HEK293 (cell line): ENCODE measurements at regions of chr9 and their contacts with region 1.

Region 1: DNA sequence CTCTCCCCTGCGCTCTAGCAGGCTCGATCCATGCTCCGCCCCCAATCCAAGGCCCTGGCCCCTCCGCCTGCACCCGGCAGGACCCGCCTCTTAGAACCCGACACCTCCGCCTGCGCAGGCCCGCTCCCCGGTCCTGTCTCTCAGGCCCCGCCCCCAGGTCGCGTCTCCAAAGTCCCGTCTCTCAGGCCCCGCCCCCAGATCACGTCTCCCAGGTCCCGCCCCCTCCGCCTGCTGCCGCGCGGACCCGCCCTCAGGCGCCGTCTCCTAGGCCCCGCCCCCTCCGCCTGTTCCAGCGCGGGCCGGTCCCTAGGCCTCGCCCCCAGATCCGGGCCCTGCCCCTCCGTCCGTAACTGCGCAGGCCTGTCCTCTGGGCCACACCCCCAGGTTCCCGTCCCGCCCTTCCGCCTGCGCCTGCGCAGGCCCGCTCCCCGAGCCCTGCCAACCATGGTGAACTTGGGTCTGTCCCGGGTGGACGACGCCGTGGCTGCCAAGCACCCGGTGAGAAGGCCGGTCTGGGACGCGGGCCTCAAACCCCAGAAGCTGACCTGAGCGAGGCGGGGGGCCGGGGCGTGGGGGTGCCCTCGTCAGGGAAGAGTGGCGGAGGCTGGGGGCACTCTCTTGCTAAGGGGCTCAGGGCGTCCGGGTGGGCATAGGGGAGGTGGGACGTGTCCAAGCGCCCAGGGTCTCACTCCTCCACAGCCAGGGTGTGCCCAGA is at the start of gene TMEM141:
- H3K4me3 ChIP-seq: peak within 1 kb of the TSS; percentile 47
- H3K27ac ChIP-seq: peak within 1 kb of the TSS; percentile 74
- H3K4me1 ChIP-seq: peaks cover 7% of the 10 kb centered on the region
- CTCF ChIP-seq: no peak

Region 2: DNA sequence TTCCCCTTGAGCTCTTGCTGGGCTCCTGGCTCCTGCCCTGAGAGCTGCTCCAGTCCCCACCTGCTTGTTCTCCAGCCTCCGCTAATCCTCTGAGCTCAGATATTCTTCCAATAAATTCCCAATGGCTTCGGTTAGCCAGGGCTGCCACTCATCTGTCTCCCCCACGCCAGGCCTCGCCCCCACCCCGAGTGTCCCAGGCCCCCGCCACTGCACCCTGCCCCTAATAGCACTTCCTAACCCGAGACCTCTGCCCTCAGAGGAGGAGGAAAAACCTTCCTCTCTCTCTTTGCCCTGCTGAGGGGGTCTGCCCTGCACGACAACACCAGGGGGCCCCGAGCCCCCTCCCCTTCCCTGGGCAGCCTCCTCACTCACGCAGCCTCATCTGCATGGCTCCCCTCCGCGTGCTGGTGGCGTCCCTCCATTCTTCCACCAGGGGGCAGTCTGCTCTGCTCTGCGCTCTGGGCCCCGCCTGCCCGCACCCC is 21.3 kb before region 1 on chr9:
- CTCF ChIA-PET with region 1: interaction called, 16 read pairs
- POLR2A ChIA-PET with region 1: no interaction called
- H3K4me3 ChIP-seq: no peak overlapping the region
- H3K27ac ChIP-seq: no peak overlapping the region
- H3K4me1 ChIP-seq: no peaks in the 10 kb centered on the region
- CTCF ChIP-seq: peak; percentile 59

Region 3: DNA sequence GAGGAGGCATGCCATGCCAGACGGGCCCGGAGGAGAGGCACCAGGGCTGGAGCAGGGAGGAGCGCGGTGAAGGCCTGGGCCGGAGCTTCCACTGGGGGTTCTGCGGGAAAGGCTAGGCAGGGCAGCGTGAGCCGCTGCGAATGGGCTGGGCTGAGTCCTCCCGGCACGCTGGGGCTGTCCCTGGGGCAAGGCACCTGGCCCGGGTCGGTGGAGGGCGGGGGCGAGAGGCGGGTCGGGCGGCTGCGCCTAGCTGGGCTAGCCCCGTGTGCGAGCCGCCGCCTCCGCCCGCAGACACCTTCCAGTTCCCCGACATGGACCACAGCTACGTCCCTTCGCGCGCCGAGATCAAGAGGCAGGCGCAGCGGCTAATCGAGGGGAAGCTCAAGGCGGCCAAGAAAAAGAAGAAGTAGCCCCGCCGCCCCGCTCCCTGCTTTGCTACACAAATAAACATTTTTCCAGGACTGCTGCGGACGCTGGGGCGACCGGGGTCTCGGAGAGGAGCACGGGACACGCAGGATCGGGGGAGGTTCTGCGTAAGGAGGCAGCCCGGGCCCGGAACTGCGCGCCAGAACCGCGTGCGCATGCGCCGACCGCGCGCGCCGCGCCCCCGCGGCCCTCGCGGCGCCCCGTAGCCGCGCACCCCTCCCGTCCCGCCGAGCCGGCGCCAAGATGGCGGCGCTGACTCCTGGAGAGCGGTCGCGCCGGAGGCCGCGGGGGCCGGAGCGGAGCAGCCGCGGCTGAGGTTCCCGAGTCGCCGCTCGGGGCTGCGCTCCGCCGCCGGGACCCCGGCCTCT is 16.4 kb after region 1 on chr9 and contains the start of gene RABL6:
- CTCF ChIA-PET with region 1: interaction called, 18 read pairs
- POLR2A ChIA-PET with region 1: interaction called, 6 read pairs
- H3K4me3 ChIP-seq: peak within 1 kb of the TSS; percentile 84
- H3K27ac ChIP-seq: peak within 1 kb of the TSS; percentile 96
- H3K4me1 ChIP-seq: peaks cover 7% of the 10 kb centered on the region; the same call in 1 of the 2 replicates
- CTCF ChIP-seq: no peak

Region 4: GRCh38 chr9:136840140-136840687 is 49.1 kb after region 1 on chr9:
- CTCF ChIA-PET with region 1: interaction called, 13 read pairs
- POLR2A ChIA-PET with region 1: interaction called, 3 read pairs
- H3K4me3 ChIP-seq: no peak overlapping the region
- H3K27ac ChIP-seq: peak overlapping the region; percentile 22; the same call in 1 of the 2 replicates
- H3K4me1 ChIP-seq: 0 out of 2 replicates have a peak, but pooled peaks cover 5% of the 10 kb centered on the region
- CTCF ChIP-seq: no peak